HCT116 (cell line): ENCODE measurements at regions of chr1 and their contacts with region 1.

Region 1: DNA sequence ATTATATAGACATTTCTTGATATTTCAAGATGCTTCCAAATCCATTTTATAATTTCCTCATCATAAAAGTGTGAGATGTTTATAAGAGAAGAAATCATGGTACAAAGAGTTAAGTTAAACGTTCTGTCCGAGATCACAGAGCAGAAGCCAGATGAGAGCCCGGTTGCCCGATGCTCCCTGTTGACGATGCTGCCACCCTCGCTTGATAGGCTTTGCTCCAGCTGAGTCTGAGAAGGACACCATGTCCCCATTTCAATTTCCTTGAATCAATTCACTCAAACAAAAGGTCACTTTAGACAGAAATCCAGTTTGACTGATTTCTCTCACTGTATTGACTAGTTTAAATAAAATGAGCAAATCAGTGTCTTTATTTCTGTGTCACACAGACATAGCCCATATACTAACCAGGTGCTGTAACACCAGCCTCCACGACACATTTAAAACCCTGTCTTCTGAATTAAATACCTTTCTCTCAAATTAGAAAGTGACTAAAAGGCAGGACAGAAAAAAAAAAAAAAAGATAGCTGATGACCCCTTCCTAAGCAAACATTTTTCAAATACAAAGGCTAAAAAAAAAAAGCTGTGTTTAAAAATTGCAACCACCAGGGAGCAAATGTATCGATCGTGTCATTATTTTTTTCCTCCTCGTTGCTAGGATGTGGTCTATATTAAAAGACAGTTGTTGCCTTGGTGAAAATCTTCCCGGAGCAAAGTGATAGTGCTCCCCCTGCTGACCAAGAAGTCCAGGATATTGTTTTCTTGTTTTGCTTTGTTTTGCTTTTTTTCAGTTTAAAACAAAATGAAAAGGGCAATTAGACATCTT is 35.2 kb downstream of the DNASE2B start:
- DNase-seq: peak; percentile 87
- ATAC-seq: peak; percentile 76
- H3K4me3 ChIP-seq: peak overlapping the region; percentile 2 to 42; a peak in 3 of 4 replicates
- H3K27ac ChIP-seq: peak overlapping the region; percentile 95
- H3K4me1 ChIP-seq: peaks cover 49 to 66% of the 10 kb centered on the region in 2 experiments
- H3K27me3 ChIP-seq: no peaks in the 10 kb centered on the region
- CTCF ChIP-seq: peak; percentile 65 to 86 (median 81)
- POLR2A ChIP-seq: no peak
- RAD21 ChIP-seq: peak; percentile 96

Region 2: DNA sequence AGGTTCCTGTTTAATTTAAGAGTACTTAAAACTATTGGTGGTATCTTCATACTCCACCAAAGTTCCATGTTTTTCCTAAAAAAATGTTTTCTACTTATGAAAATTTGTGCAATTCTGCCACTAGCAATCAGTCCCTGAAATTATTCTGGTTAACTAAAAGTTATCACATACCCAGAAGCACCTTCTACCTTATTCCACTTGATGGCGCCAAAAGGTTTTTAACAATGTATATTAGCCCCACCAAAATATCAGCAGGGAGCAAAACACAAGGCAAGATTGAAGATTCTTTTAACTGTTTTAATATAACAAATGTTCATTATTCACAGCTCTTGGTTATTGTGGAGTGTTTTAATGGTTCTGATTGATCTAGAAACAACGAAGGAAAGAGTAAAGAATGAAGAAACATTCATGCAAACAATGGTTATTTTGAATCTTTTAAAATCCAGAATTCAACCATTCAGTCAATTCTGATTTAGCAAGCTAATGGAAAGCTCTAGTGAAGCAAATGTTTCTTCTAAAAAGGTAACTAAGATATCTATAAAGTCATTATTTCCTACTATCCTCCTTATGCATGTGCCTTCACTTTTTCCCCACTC is 501.7 kb before region 1 on chr1:
- CTCF ChIA-PET with region 1: no interaction called
- POLR2A ChIA-PET with region 1: no interaction called
- RAD21 ChIA-PET with region 1: no interaction called
- intact Hi-C with region 1: loop called (anchors 2 kb)
- DNase-seq: peak; percentile 39
- ATAC-seq: peak; percentile 88
- H3K4me3 ChIP-seq: no peak overlapping the region
- H3K27ac ChIP-seq: no peak overlapping the region
- H3K4me1 ChIP-seq: peaks cover 0 to 4% of the 10 kb centered on the region in 2 experiments; a peak in 1 of 4 replicates
- H3K27me3 ChIP-seq: no peaks in the 10 kb centered on the region
- CTCF ChIP-seq: peak; percentile 68 to 82 (median 81); a peak in 5 of 6 replicates
- POLR2A ChIP-seq: no peak
- RAD21 ChIP-seq: peak; percentile 88

Region 3: GRCh38 chr1:84174051-84174556 is 259.4 kb before region 1 on chr1:
- CTCF ChIA-PET with region 1: no interaction called
- POLR2A ChIA-PET with region 1: no interaction called
- RAD21 ChIA-PET with region 1: no interaction called
- intact Hi-C with region 1: no loop called
- DNase-seq: peak; percentile 94
- ATAC-seq: peak; percentile 90
- H3K4me3 ChIP-seq: peak overlapping the region; percentile 33 to 45
- H3K27ac ChIP-seq: peak overlapping the region; percentile 99
- H3K4me1 ChIP-seq: peaks cover 89 to 97% of the 10 kb centered on the region in 2 experiments
- H3K27me3 ChIP-seq: no peaks in the 10 kb centered on the region
- CTCF ChIP-seq: no peak
- POLR2A ChIP-seq: no peak
- RAD21 ChIP-seq: peak; percentile 39

Region 4: GRCh38 chr1:84298328-84298683 is 135.2 kb before region 1 on chr1:
- CTCF ChIA-PET with region 1: no interaction called
- POLR2A ChIA-PET with region 1: no interaction called
- RAD21 ChIA-PET with region 1: no interaction called
- intact Hi-C with region 1: loop called (anchors 2 kb)
- DNase-seq: no peak
- ATAC-seq: peak; percentile 63
- H3K4me3 ChIP-seq: peak overlapping the region; percentile 70 to 74
- H3K27ac ChIP-seq: peak overlapping the region; percentile 93
- H3K4me1 ChIP-seq: peaks cover 29 to 55% of the 10 kb centered on the region in 2 experiments
- H3K27me3 ChIP-seq: no peaks in the 10 kb centered on the region
- CTCF ChIP-seq: no peak
- POLR2A ChIP-seq: no peak
- RAD21 ChIP-seq: no peak

Region 5: GRCh38 chr1:84365225-84366221 is 67.9 kb before region 1 on chr1:
- CTCF ChIA-PET with region 1: no interaction called
- POLR2A ChIA-PET with region 1: no interaction called
- RAD21 ChIA-PET with region 1: no interaction called
- intact Hi-C with region 1: loop called (anchors 2 kb)
- DNase-seq: peak; percentile 99
- ATAC-seq: peak; percentile 87
- H3K4me3 ChIP-seq: peak overlapping the region in 1 of 2 experiments; percentile 1; a peak in 1 of 4 replicates
- H3K27ac ChIP-seq: peak overlapping the region; percentile 99
- H3K4me1 ChIP-seq: peaks cover 38 to 63% of the 10 kb centered on the region in 2 experiments
- H3K27me3 ChIP-seq: no peaks in the 10 kb centered on the region
- CTCF ChIP-seq: no peak
- POLR2A ChIP-seq: peak; percentile 8
- RAD21 ChIP-seq: peak; percentile 40; the same call in 1 of the 2 replicates

Region 6: DNA sequence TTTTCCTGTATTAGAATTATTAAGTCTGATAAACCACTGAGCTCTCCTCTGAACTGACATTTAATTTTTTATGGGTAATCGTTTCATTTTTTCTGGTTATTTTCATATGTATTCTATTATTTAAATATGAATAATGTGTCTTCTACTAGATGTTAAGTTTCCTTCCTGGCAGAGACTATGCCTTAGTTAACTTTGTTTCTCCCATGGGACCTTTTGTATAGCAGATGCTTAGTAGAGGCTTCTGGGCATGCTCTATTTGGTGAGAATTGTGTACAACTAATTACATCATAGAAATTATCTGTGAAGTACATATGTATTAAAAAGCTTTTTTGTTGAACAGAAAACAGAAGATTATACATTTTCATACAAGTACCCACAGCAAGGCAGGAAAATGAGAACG is 117.4 kb after region 1 on chr1:
- CTCF ChIA-PET with region 1: no interaction called
- POLR2A ChIA-PET with region 1: no interaction called
- RAD21 ChIA-PET with region 1: no interaction called
- intact Hi-C with region 1: no loop called
- DNase-seq: no peak
- ATAC-seq: no peak
- H3K4me3 ChIP-seq: no peak overlapping the region
- H3K27ac ChIP-seq: no peak overlapping the region
- H3K4me1 ChIP-seq: no peaks in the 10 kb centered on the region
- H3K27me3 ChIP-seq: no peaks in the 10 kb centered on the region
- CTCF ChIP-seq: no peak
- POLR2A ChIP-seq: no peak
- RAD21 ChIP-seq: no peak

Region 7: GRCh38 chr1:84936116-84936810 is 502.8 kb after region 1 on chr1:
- CTCF ChIA-PET with region 1: no interaction called
- POLR2A ChIA-PET with region 1: no interaction called
- RAD21 ChIA-PET with region 1: no interaction called
- intact Hi-C with region 1: loop called (anchors 5 kb)
- DNase-seq: peak; percentile 39
- ATAC-seq: peak; percentile 83
- H3K4me3 ChIP-seq: no peak overlapping the region
- H3K27ac ChIP-seq: no peak overlapping the region
- H3K4me1 ChIP-seq: no peaks in the 10 kb centered on the region
- H3K27me3 ChIP-seq: no peaks in the 10 kb centered on the region
- CTCF ChIP-seq: peak; percentile 71 to 95 (median 90); a peak in 5 of 6 replicates
- POLR2A ChIP-seq: no peak
- RAD21 ChIP-seq: peak; percentile 92